ENCODE measurements at regions of chr3 and their contacts with region 1.

Region 1: DNA sequence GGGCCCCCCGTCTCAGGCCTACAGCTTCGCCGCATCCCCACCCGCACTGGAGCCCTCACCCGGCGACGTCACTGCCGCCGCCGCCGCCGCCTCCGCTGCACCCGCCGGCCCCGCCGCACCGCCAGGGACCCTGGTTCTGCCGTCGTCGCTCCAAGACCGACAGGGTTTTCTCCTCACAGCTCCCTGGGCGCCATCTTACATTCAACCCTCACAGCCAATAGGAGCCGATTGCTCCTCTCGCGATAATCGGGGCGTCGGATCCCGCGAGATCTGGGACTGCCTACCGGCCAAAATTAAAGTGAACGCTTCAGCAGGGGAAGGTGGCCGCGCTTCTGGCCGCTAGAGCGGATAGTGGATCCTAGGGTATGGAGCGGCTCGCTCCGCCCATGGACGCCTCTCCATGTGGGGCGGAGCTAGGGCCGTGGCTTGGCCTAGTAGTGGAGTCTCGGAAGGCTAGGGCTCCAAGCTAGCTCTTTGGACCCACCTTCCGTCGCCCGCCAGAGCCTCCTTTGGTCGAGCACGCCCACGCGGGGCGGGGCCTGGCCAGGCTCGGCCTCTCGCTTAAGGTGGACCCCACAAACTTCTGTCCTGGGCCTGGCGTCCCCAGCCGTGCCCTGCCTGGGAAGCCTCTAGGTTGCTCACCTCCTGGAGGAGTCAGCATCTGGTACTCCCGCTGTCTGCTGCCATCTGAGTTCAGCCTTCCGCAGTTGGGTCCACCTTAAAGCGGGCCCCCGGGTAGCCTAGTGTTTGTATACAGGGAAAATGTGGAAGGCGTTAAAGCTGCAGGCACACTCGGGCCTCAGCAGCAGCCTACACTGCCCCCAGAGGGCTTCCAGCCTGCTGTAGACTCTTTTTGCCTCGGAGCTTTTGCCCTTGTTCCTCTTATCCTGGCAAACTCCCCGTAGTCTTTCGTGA is at the start of gene QRICH1:
- DNase-seq: peak; percentile 97
- H3K4me3 Mint-ChIP-seq: peak within 1 kb of the TSS; percentile 84
- H3K27ac Mint-ChIP-seq: peak within 1 kb of the TSS; percentile 91
- H3K4me1 Mint-ChIP-seq: peaks cover 34% of the 10 kb centered on the region
- H3K27me3 Mint-ChIP-seq: no peaks in the 10 kb centered on the region
- total RNA-seq, gene QRICH1: 136 to 140 TPM

Region 2: GRCh38 chr3:48989796-48990635 is 104.1 kb before region 1 on chr3 and contains the start of gene P4HTM:
- CTCF ChIA-PET with region 1: interaction called, 31 read pairs
- POLR2A ChIA-PET with region 1: interaction called, 23 read pairs
- DNase-seq: peak; percentile 79
- H3K4me3 Mint-ChIP-seq: peak within 1 kb of the TSS; percentile 92
- H3K27ac Mint-ChIP-seq: peak within 1 kb of the TSS; percentile 90
- H3K4me1 Mint-ChIP-seq: peaks cover 45% of the 10 kb centered on the region
- H3K27me3 Mint-ChIP-seq: no peaks in the 10 kb centered on the region
- total RNA-seq, gene P4HTM: 48.4 to 49.9 TPM

Region 3: GRCh38 chr3:49021813-49022687 is 72.1 kb before region 1 on chr3 and contains the start of gene NDUFAF3:
- CTCF ChIA-PET with region 1: interaction called, 28 read pairs
- POLR2A ChIA-PET with region 1: interaction called, 99 read pairs
- DNase-seq: peak; percentile 93
- H3K4me3 Mint-ChIP-seq: peak within 1 kb of the TSS; percentile 98
- H3K27ac Mint-ChIP-seq: peak within 1 kb of the TSS; percentile 98
- H3K4me1 Mint-ChIP-seq: peaks cover 67% of the 10 kb centered on the region
- H3K27me3 Mint-ChIP-seq: no peaks in the 10 kb centered on the region
- total RNA-seq, gene NDUFAF3: 98.1 to 108 TPM

Region 4: GRCh38 chr3:49104483-49105291 is 10.6 kb after region 1 on chr3 and contains the start of gene QARS1:
- CTCF ChIA-PET with region 1: interaction called, 33 read pairs
- POLR2A ChIA-PET with region 1: interaction called, 133 read pairs
- DNase-seq: peak; percentile 92
- H3K4me3 Mint-ChIP-seq: peak within 1 kb of the TSS; percentile 95
- H3K27ac Mint-ChIP-seq: peak within 1 kb of the TSS; percentile 90
- H3K4me1 Mint-ChIP-seq: peaks cover 29% of the 10 kb centered on the region
- H3K27me3 Mint-ChIP-seq: no peaks in the 10 kb centered on the region
- total RNA-seq, gene QARS1: 194 to 212 TPM

Region 5: DNA sequence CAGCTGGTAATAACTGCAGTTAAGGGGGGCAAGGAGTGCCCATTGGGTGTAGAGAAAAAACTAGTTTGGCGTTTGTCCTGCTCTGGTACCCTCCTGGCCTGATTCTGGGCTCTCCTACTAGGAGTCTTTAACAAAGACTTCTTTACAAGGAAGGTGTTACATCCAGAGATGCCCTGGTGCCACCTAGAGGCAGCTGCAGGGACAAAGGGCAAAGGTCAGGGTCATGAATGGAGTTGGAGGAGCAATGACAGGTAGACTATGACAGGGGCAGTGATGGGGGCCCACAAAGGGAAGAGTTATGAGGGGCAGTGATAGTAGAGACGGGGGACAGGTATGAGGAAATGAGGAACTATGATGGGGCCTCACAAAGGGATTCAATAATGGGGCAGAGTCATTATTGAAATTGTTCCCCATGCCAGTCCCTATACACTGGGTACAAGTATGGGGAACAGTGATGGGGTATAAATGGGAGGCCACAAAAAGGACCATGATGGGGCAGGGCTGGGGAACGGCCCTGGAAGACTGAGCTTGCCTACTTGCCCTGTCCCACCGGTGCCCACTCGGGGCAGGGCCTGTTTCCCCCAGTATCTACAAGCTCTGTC is 64.1 kb after region 1 on chr3:
- CTCF ChIA-PET with region 1: interaction called, 11 read pairs
- POLR2A ChIA-PET with region 1: interaction called, 6 read pairs
- DNase-seq: peak; percentile 75
- H3K4me3 Mint-ChIP-seq: no peak overlapping the region
- H3K27ac Mint-ChIP-seq: no peak overlapping the region
- H3K4me1 Mint-ChIP-seq: peaks cover 13% of the 10 kb centered on the region
- H3K27me3 Mint-ChIP-seq: no peaks in the 10 kb centered on the region

Region 6: GRCh38 chr3:49411968-49412631 is 318.0 kb after region 1 on chr3 and contains the starts of genes RHOA and TCTA:
- CTCF ChIA-PET with region 1: interaction called, 3 read pairs
- POLR2A ChIA-PET with region 1: interaction called, 19 read pairs
- DNase-seq: peak; percentile 99
- H3K4me3 Mint-ChIP-seq: peak within 1 kb of the TSS; percentile 98
- H3K27ac Mint-ChIP-seq: peak within 1 kb of the TSS; percentile 99
- H3K4me1 Mint-ChIP-seq: peaks cover 68% of the 10 kb centered on the region
- H3K27me3 Mint-ChIP-seq: peaks cover 2% of the 10 kb centered on the region
- total RNA-seq, gene RHOA: 504 to 505 TPM
- total RNA-seq, gene TCTA: 19.7 to 22.4 TPM

Measured in activated CD4-positive, alpha-beta memory T cell treated with anti-CD3 and anti-CD28 coated beads, Interleukin-2, amount 10 ng/mL, durations not matched to agents 7 days and 5 days (primary cell).